Activated CD8-positive, alpha-beta T cell treated with anti-CD3 and anti-CD28 coated beads for 36 hours (primary cell): ENCODE measurements at regions of chr6 and their contacts with region 1.

Region 1: GRCh38 chr6:20534295-20535262 is at the start of gene CDKAL1:
- DNase-seq: peak; percentile 96
- ATAC-seq: peak; percentile 95
- H3K4me3 Mint-ChIP-seq: peak within 1 kb of the TSS; percentile 97
- H3K27ac Mint-ChIP-seq: peak within 1 kb of the TSS; percentile 98
- H3K4me1 Mint-ChIP-seq: peaks cover 37% of the 10 kb centered on the region
- H3K27me3 Mint-ChIP-seq: peaks cover 1% of the 10 kb centered on the region
- CTCF ChIP-seq: no peak
- total RNA-seq, gene CDKAL1: 21.6 to 23.6 TPM

Region 2: DNA sequence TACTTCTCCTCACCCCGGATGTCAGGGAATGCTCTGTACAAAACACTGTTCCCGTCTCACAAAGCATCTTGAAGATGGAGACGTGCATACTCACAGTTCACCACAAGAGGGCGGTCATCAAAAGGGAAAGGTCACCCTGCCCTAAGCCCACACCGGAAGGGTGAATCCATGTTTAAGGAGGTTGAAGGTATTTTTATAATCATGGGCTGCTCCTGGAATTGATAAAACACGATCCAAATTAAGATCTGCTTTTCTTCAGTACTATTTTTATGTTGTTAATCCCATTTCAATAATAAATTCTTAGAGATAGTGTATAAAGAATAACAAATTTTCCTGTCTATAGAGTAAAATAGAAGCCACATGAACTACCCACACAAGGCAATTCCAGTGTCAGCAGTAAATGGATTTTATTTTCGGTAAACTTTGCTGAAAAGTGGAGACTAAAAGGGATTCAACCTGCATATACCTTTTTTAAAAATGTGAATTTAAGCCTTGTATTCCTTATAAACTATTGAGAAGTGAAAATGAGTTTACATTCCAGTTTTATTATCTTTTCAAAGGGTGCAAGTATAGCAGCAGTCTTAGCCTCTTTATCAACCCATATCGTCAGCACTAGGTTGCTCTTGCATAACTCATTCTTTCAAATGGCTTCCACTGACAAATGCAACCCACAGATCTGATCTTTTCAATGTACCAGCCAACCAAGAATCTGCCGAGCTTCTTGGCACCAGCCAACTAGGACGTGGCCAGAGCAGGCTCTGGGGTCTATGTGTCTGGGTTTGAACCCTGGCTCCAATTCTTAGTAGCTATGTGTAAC is 242.6 kb before region 1 on chr6:
- CTCF ChIA-PET with region 1: interaction called, 11 read pairs
- POLR2A ChIA-PET with region 1: no interaction called
- intact Hi-C with region 1: no loop called
- DNase-seq: peak; percentile 90
- ATAC-seq: peak; percentile 94
- H3K4me3 Mint-ChIP-seq: peak overlapping the region; percentile 42
- H3K27ac Mint-ChIP-seq: peak overlapping the region; percentile 26
- H3K4me1 Mint-ChIP-seq: peaks cover 15% of the 10 kb centered on the region
- H3K27me3 Mint-ChIP-seq: no peaks in the 10 kb centered on the region
- CTCF ChIP-seq: peak; percentile 94